T-cell (primary cell): ENCODE measurements at regions of chr3 and their contacts with region 1.

Region 1: DNA sequence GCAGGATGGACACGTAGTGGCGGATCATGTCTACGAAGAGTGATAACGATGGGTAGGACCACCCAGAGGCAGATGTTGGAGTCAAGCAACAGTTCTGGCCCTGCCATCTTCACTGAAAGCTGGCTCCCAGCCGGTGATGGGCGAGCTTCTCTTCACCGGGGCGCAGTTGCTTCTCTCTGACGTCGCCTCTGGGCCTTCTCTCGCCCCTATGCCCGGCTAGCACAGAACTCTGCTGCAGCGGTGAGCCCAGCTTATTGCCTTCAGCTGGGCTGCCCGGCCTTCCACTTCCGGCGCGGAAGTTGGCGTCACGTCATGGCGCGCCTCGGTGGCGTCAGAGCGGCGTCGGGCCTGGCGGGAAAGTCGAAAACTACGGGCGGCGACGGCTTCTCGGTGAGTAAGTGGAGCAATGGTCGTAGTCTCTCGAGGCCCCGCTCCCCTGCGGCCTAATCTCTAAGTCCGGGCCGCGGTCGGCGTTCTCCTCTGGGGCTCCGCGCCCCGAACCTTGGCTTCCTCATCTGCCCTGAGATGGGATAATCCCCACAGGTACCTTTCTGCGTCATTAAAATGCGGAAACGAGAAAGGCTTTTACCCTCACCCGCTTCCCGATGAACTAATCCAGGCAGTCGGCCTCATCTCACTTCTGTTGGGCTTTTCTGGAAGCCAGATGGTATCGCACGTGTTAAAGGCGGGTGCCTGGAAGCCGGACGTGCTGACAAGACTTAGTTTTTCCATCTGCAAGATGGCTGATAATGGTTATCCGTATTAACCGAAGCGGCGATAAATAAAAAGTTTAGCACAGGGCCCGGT is at the start of gene FANCD2:
- DNase-seq: peak; percentile 80 to 96 (median 89)
- ATAC-seq: peak; percentile 93 to 96 (median 94)
- H3K4me3 ChIP-seq: peak within 1 kb of the TSS; percentile 84 to 93
- H3K4me3 Mint-ChIP-seq: peak within 1 kb of the TSS; percentile 94 to 96 (median 95)
- H3K27ac ChIP-seq: peak within 1 kb of the TSS; percentile 85
- H3K27ac Mint-ChIP-seq: peak within 1 kb of the TSS; percentile 88 to 92
- H3K4me1 ChIP-seq: peaks cover 12 to 24% of the 10 kb centered on the region in 2 experiments
- H3K4me1 Mint-ChIP-seq: peaks cover 29 to 38% (median 31%) of the 10 kb centered on the region in 3 donors
- H3K27me3 ChIP-seq: no peaks in the 10 kb centered on the region
- H3K27me3 Mint-ChIP-seq: no peaks in the 10 kb centered on the region
- total RNA-seq, gene FANCD2: 15.4 to 22.5 (median 18.2) TPM

Region 2: DNA sequence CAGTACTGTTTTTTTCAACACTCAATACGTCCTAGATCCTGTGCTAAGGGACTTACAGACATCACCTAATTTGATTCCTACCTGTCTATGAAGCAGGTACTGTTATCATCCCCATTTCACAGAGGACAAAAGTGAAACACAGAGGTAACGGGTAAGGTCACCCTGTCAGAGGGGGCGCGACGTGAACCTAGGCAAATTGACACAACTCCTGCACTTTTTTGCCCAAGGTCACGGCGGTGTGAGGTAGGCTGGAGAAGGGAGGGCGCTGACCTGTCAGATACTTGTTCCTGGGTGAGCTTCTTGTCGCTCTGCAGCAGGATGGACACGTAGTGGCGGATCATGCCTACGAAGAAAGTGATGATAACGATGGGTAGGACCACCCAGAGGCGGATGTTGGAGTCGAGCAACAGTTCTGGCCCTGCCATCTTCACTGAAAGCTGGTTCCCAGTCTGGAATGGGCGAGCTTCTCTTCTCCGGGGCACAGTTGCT is 40.0 kb before region 1 on chr3:
- CTCF ChIA-PET with region 1: no interaction called
- POLR2A ChIA-PET with region 1: interaction called, 5 to 18 read pairs
- DNase-seq: peak in 1 of 35 experiments; percentile 11
- ATAC-seq: peak; percentile 54 to 63 (median 60)
- H3K4me3 ChIP-seq: peak overlapping the region; percentile 96 to 98
- H3K4me3 Mint-ChIP-seq: peak overlapping the region; percentile 95 to 97 (median 96)
- H3K27ac ChIP-seq: peak overlapping the region; percentile 87
- H3K27ac Mint-ChIP-seq: peak overlapping the region; percentile 92 to 95
- H3K4me1 ChIP-seq: peaks cover 19 to 29% of the 10 kb centered on the region in 2 experiments
- H3K4me1 Mint-ChIP-seq: peaks cover 28 to 45% (median 30%) of the 10 kb centered on the region in 3 donors
- H3K27me3 ChIP-seq: no peaks in the 10 kb centered on the region
- H3K27me3 Mint-ChIP-seq: no peaks in the 10 kb centered on the region

Region 3: DNA sequence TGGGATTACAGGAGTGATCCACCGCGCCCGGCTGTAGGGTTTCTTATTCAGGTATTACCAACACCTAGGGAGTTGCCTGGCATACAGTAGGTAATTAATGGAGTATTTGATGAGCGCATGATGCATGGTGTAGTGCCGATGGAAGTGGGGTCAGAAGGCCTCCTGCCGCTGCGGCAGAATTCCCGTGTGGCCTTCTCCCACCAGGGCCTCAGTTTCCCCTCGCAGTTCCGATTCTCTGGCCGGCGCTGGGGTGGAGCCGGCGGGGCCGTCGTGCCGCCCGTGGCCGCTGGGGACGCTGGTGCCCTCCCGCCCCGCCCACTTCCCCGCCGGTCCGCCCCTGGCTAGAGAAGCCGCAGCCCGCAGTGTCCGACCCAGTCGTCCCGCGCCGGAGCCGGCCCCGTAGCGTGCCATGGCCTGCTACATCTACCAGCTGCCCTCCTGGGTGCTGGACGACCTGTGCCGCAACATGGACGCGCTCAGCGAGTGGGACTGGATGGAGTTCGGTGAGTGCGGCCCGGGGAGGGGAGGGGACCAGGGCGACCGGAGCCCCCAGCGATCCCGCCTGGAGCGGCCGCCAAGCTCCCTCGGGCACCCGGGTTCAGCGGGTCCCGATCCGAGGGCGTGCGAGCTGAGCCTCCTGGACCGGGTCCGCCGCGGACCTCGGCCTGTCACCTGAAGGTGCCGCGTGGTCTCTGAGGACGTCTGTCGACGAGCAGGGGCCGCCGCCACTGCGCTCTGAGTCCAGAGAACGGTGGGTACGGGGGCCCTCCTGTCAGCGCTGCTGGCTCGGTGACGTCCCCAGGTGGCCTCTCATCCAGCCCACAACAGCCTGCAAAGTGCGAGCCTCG is 138.5 kb after region 1 on chr3 and contains the start of gene IRAK2:
- CTCF ChIA-PET with region 1: interaction called in 1 of 2 experiments, 14 read pairs
- POLR2A ChIA-PET with region 1: interaction called in 1 of 2 experiments, 6 read pairs
- DNase-seq: peak in 33 of 35 experiments; percentile 11 to 76 (median 42)
- ATAC-seq: peak; percentile 87 to 94 (median 90)
- H3K4me3 ChIP-seq: peak within 1 kb of the TSS; percentile 77
- H3K4me3 Mint-ChIP-seq: peak within 1 kb of the TSS; percentile 70 to 83 (median 73)
- H3K27ac ChIP-seq: no peak within 1 kb of the TSS
- H3K27ac Mint-ChIP-seq: peak within 1 kb of the TSS in 1 of 2 donors; percentile 80
- H3K4me1 ChIP-seq: peaks cover 7 to 19% of the 10 kb centered on the region in 2 experiments
- H3K4me1 Mint-ChIP-seq: peaks cover 18 to 26% (median 19%) of the 10 kb centered on the region in 3 donors
- H3K27me3 ChIP-seq: no peaks in the 10 kb centered on the region
- H3K27me3 Mint-ChIP-seq: no peaks in the 10 kb centered on the region
- total RNA-seq, gene IRAK2: 2.9 to 5.0 (median 3.7) TPM